ENCODE measurements at regions of chr22 and their contacts with region 1.

Region 1: GRCh38 chr22:43126480-43127165 is 16.1 kb downstream of the BIK start:
- DNase-seq: peak; percentile 56 to 85
- ATAC-seq: peak; percentile 69 to 88; a peak in 4 of 6 replicates
- H3K4me3 ChIP-seq: no peak overlapping the region
- H3K27ac ChIP-seq: peak overlapping the region in 1 of 2 experiments; percentile 80; a peak in 3 of 6 replicates
- H3K4me1 ChIP-seq: peaks cover 22% of the 10 kb centered on the region
- CTCF ChIP-seq: no peak
- EP300 ChIP-seq: no peak
- POLR2A ChIP-seq: no peak
- RAD21 ChIP-seq: no peak

Region 2: GRCh38 chr22:43142880-43143562 is 16.4 kb after region 1 on chr22 and contains the start of gene MCAT:
- CTCF ChIA-PET with region 1: interaction called, 11 read pairs
- POLR2A ChIA-PET with region 1: interaction called, 3 read pairs
- DNase-seq: peak; percentile 65 to 74
- ATAC-seq: peak; percentile 95 to 97
- H3K4me3 ChIP-seq: peak within 1 kb of the TSS; percentile 97
- H3K27ac ChIP-seq: peak within 1 kb of the TSS; percentile 85 to 97
- H3K4me1 ChIP-seq: peaks cover 6% of the 10 kb centered on the region; the same call in 2 of the 3 replicates
- CTCF ChIP-seq: no peak
- EP300 ChIP-seq: no peak
- POLR2A ChIP-seq: peak; percentile 54
- RAD21 ChIP-seq: no peak
- polyA plus RNA-seq, gene MCAT: 11.8 and 13.4 TPM in 2 replicates